ENCODE measurements at regions of chr12 and their contacts with region 1.

Region 1: GRCh38 chr12:13100882-13101769 is 2.3 kb downstream of the GSG1 start:
- DNase-seq: peak; percentile 93
- ATAC-seq: peak; percentile 89
- H3K4me3 Mint-ChIP-seq: peak overlapping the region; percentile 66
- H3K27ac Mint-ChIP-seq: peak overlapping the region; percentile 80
- H3K4me1 Mint-ChIP-seq: peaks cover 51% of the 10 kb centered on the region
- H3K27me3 Mint-ChIP-seq: no peaks in the 10 kb centered on the region

Region 2: DNA sequence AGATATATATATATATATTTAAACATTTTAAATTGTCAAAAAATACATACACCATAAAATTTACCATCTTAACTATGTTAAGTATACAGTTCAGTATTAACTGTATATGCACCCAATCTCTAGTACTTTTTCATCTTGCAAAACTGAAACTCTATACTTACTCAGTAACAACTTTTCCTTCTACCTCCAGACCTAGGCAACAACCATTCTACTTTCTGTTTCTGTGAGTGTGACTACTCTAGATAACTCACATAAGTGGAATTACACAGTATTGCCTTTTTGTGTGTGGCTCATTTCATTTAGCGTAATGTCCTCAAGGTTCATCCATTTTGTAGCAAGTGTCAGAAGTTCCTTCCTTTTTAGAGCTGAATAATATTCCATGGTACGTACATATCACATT is 48.7 kb before region 1 on chr12:
- CTCF ChIA-PET with region 1: no interaction called
- DNase-seq: no peak
- ATAC-seq: no peak
- H3K4me3 Mint-ChIP-seq: no peak overlapping the region
- H3K27ac Mint-ChIP-seq: no peak overlapping the region
- H3K4me1 Mint-ChIP-seq: peaks cover 6% of the 10 kb centered on the region
- H3K27me3 Mint-ChIP-seq: no peaks in the 10 kb centered on the region

Region 3: DNA sequence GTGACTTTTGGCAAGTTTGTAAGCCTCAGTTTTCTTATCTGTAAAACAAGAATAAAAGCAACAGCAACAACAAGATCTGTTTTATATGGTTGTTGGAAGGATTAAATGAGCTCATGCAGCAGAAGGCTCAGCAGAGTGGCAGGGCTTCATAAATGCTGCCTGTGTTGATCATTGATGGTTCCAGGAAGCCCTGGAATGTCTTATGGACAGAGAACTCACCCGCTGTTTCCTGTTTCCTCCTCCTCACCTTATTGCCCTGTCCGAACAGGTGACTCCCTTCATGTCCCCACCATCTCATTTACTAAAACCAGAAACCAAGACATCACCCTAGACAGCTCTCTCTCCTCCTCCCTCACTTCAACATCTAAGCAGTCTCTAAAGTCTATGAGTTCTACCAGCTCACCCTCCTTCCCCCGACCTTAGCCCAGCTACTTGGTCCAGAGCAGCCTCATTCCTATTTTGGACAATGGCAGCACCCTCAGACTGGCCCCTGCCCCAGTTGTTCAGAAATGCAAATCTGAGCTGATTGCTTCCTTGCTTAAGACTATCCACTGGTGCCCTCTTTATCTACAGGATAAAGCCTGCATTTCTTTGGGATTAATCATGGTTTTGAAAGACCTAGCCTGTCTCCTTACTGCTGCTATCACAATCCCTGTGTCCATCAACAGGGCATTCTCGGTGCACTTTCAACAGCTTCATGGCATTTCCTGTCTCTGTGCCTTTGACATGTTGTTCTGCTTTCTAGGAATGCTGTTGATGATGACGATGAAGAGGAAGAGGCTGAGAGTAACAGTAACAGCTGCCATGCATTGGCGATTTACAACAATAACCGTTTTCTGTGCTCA is 23.8 kb after region 1 on chr12:
- CTCF ChIA-PET with region 1: no interaction called
- DNase-seq: no peak
- ATAC-seq: no peak
- H3K4me3 Mint-ChIP-seq: no peak overlapping the region
- H3K27ac Mint-ChIP-seq: no peak overlapping the region
- H3K4me1 Mint-ChIP-seq: peaks cover 2% of the 10 kb centered on the region
- H3K27me3 Mint-ChIP-seq: peaks cover 15% of the 10 kb centered on the region

Region 4: GRCh38 chr12:13169272-13169671 is 68.1 kb after region 1 on chr12:
- CTCF ChIA-PET with region 1: no interaction called
- DNase-seq: no peak
- ATAC-seq: no peak
- H3K4me3 Mint-ChIP-seq: no peak overlapping the region
- H3K27ac Mint-ChIP-seq: no peak overlapping the region
- H3K4me1 Mint-ChIP-seq: peaks cover 43% of the 10 kb centered on the region
- H3K27me3 Mint-ChIP-seq: peaks cover 44% of the 10 kb centered on the region

Region 5: GRCh38 chr12:13196130-13196921 is 95.2 kb after region 1 on chr12 and contains the start of gene EMP1:
- CTCF ChIA-PET with region 1: interaction called, 24 read pairs
- DNase-seq: peak; percentile 89
- ATAC-seq: peak; percentile 95
- H3K4me3 Mint-ChIP-seq: peak within 1 kb of the TSS; percentile 78
- H3K27ac Mint-ChIP-seq: peak within 1 kb of the TSS; percentile 82
- H3K4me1 Mint-ChIP-seq: peaks cover 28% of the 10 kb centered on the region
- H3K27me3 Mint-ChIP-seq: peaks cover 35% of the 10 kb centered on the region
- total RNA-seq, gene EMP1: 6.1 to 8.8 TPM

Region 6: DNA sequence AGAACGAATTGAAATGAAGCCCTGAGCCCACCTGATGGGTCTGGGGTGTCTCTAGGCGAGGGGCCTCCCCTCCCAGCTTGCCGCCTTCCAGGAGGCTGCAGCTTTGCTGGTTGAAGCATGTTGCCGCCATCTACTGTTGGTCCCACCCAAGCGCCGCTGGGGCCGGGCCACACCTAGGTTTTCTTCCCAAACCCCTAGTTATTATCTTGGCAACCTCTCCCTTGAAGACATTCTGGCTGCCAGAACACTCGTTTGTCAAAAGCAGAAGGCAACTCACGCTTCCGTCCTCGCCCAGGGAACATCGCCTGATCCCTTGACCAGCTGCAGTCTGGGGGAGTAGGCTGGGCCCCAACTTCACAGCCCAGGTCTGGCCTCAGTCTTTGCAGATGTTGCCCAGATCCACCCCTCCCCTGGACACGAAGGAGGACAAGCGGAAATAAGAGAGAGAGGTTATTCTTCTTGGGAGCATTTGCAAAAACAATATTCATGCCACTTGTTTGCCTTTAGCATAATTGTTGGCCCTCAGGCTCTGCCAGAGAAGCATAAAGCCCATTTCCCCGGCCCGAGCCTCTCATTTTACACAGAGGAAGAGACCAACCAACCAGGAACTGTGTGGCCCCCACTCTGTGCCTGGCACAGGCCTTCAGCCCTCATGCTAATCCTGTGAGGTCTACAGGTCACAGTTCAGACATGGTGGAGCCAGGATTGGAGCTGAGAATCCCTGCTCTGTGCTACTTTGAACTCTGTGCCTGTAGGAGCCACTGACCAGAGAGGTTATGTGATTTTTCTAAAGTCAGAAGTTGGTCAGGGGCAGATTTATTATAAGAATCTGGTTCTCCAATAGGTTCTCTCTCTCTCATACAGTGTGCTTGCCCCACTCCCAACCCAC is 102.2 kb after region 1 on chr12:
- CTCF ChIA-PET with region 1: interaction called, 148 read pairs
- DNase-seq: no peak
- ATAC-seq: no peak
- H3K4me3 Mint-ChIP-seq: no peak overlapping the region
- H3K27ac Mint-ChIP-seq: no peak overlapping the region
- H3K4me1 Mint-ChIP-seq: peaks cover 24% of the 10 kb centered on the region
- H3K27me3 Mint-ChIP-seq: peaks cover 31% of the 10 kb centered on the region

Measured in activated CD8-positive, alpha-beta memory T cell treated with anti-CD3 and anti-CD28 coated beads, Interleukin-2, amount 10 ng/mL, durations not matched to agents 7 days and 5 days (primary cell).